GM12878 (cell line): ENCODE measurements at regions of chr21 and their contacts with region 1.

Region 1: DNA sequence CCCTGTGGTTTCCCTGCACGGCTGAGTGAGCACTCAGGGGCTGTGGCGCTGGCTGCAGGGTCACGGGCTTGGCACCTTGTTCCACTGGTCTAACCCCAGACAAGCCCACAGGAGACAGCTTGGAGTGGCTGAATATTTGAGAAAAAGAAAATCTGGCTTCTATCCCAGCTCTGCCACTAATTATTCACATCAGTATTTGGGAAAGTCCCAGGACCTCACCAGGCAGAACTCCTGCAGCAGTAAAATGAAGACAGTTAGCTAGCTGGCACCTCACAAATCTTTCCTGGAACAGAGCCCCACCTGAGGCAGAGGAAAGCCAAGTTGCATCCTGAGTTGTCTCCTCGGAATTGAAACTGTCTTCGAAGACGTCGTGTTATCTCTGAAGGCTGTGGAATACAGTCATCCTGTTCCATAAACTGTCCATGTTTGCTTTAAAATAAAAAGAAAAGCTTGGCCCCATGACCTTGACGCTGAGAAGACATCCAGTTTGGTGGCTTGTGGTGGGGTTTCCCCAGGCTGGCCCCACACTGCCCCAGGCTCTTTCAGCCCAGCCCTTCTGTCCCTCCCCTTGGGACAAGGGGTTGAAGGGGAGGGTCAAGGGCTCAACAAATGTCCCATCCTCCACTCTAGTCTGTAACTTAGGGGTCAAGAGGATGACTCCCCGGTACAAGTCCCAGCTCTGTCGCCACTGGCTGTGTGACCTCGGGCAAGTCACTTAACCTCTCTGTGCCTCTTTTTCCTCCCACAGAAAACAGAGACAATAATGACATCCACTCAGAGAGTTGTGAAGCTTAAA is 93.8 kb upstream of the TMPRSS2 start:
- DNase-seq: peak; percentile 16
- ATAC-seq: peak; percentile 71
- H3K4me3 ChIP-seq: no peak overlapping the region
- H3K27ac ChIP-seq: no peak overlapping the region
- H3K4me1 ChIP-seq: peaks cover 6% of the 10 kb centered on the region; the same call in 1 of the 2 replicates
- H3K27me3 ChIP-seq: no peaks in the 10 kb centered on the region; a peak in 1 of 4 replicates
- CTCF ChIP-seq: no peak
- EP300 ChIP-seq: no peak
- POLR2A ChIP-seq: no peak
- RAD21 ChIP-seq: no peak

Region 2: GRCh38 chr21:41482301-41482700 is 119.5 kb before region 1 on chr21:
- CTCF ChIA-PET with region 1: no interaction called
- POLR2A ChIA-PET with region 1: no interaction called
- RAD21 ChIA-PET with region 1: no interaction called
- SMC1A ChIA-PET with region 1: no interaction called
- in situ Hi-C with region 1: no loop called
- intact Hi-C with region 1: loop called (anchors 5 kb)
- DNase-seq: no peak
- ATAC-seq: peak; percentile 37; the same call in 2 of the 3 replicates
- H3K4me3 ChIP-seq: no peak overlapping the region
- H3K27ac ChIP-seq: no peak overlapping the region
- H3K4me1 ChIP-seq: 0 out of 2 replicates have a peak, but pooled peaks cover 3% of the 10 kb centered on the region
- H3K27me3 ChIP-seq: no peaks in the 10 kb centered on the region
- CTCF ChIP-seq: no peak
- EP300 ChIP-seq: no peak
- POLR2A ChIP-seq: no peak
- RAD21 ChIP-seq: no peak

Region 3: GRCh38 chr21:41630249-41630648 is 28.5 kb after region 1 on chr21:
- CTCF ChIA-PET with region 1: no interaction called
- POLR2A ChIA-PET with region 1: no interaction called
- RAD21 ChIA-PET with region 1: no interaction called
- SMC1A ChIA-PET with region 1: no interaction called
- in situ Hi-C with region 1: no loop called
- intact Hi-C with region 1: no loop called
- DNase-seq: no peak
- ATAC-seq: no peak
- H3K4me3 ChIP-seq: no peak overlapping the region
- H3K27ac ChIP-seq: no peak overlapping the region
- H3K4me1 ChIP-seq: no peaks in the 10 kb centered on the region
- H3K27me3 ChIP-seq: no peaks in the 10 kb centered on the region; a peak in 1 of 4 replicates
- CTCF ChIP-seq: no peak
- EP300 ChIP-seq: no peak
- POLR2A ChIP-seq: no peak
- RAD21 ChIP-seq: no peak